ENCODE measurements at regions of chr1 and their contacts with region 1.

Region 1: DNA sequence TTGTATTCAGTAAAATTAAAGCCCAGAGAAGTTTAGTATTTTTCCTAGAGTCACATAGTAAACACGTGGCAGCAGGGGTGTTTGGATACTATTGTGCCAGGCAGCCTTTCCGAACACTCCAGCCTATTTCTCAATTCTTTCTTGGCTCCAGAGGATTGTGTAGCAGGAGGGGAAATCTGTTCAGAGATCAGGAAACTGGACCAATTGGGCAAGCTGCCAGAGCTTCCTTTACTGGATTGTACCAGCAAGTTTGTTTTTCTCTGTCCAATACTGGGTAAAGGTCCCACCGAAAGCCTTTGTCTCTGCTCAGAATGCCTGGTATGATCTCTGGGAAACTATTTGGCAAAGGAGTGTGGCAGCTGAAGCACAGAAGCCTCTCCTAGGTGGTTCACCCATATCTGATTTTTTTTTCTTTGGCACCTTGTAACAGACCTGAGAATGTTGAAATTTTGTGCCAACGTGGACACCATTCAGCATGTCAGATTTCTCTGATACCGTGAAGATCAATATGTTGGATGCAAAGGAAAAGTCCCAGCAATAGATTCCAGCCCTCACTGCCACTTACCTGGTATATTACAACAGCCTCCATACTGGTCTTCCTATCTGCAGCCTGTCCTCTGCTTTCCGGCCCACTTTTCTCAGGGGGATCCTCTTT is 126.2 kb downstream of the FGGY start:
- DNase-seq: peak; percentile 22
- H3K4me3 ChIP-seq: no peak overlapping the region
- H3K27ac ChIP-seq: no peak overlapping the region
- H3K4me1 ChIP-seq: no peaks in the 10 kb centered on the region
- H3K27me3 ChIP-seq: no peaks in the 10 kb centered on the region
- CTCF ChIP-seq: no peak

Region 2: DNA sequence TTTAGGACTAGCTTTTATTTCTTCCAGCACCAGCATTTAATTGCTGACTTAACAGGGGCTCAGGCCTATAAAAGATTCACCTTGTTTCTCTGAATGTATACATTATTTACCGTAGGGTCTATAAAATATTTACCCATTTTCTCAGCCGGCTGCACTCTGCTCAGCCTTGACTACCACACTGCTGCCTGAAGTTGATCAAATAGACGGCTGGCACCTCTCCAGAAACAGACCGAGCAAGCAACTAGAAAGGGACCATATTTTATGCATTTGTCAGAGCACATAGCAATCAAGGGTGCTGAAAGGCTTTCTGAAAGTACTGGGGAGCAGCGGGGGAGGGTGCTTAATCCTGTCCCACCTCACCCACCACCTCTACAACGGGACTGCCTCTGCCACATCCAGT is 190.8 kb before region 1 on chr1:
- CTCF ChIA-PET with region 1: no interaction called
- POLR2A ChIA-PET with region 1: no interaction called
- intact Hi-C with region 1: no loop called
- DNase-seq: no peak
- H3K4me3 ChIP-seq: no peak overlapping the region
- H3K27ac ChIP-seq: no peak overlapping the region
- H3K4me1 ChIP-seq: no peaks in the 10 kb centered on the region
- H3K27me3 ChIP-seq: peaks cover 10% of the 10 kb centered on the region
- CTCF ChIP-seq: no peak

Region 3: DNA sequence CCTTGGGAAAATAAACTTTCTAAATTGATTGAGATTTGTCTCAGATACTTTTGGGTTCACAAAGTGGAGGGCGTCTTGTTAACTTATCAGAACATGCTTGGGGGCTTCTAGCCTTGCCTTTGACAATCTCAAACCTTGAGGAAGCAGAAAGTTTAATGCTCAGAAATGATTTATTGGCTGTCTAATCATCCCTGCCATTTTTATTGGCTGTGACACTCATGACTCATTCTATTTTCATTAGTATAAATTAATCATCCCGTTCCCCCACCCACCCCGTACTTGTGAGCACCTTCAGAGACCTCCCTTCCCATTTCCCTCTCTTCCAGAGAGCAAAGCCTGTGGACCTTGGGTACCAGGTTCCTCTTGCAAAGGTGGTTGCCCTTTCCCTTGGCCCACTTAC is 39.1 kb before region 1 on chr1:
- CTCF ChIA-PET with region 1: no interaction called
- POLR2A ChIA-PET with region 1: no interaction called
- intact Hi-C with region 1: loop called (anchors 2 kb)
- DNase-seq: no peak
- H3K4me3 ChIP-seq: no peak overlapping the region
- H3K27ac ChIP-seq: no peak overlapping the region
- H3K4me1 ChIP-seq: no peaks in the 10 kb centered on the region
- H3K27me3 ChIP-seq: peaks cover 7% of the 10 kb centered on the region
- CTCF ChIP-seq: no peak

Region 4: DNA sequence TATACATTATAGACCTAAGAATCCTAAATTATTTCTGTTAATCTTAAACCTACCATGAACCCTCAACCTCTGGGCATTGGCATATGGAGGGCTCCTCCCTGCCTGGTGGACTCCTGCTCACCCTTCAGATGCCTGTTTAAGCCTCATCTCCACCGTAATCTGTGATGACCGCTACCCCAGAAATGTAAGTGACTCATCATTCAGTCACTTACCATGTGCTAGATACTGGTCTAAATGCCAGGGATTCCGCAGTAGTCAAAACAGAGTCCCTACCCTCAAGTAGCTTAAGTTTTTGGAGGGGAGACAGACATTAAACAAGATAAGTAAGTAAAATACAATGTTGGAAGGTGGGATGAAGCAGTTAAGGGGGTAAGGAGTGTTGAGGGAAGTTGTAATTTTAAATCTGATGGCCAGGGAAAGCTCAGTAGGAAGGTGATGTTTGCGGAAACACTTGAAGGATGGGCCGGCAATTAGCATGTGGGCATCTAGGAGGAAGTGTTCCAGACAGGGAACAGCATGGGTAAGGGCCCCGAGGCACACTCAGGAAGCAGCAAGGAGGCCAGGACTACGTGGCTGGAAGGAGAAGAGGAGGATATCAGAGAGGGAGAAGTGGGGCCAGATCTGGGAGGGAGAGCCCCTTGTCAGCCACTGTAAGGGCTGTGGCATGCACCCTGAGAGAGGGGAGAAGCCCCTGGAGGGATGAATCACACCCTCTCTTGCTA is 250.0 kb after region 1 on chr1:
- CTCF ChIA-PET with region 1: no interaction called
- POLR2A ChIA-PET with region 1: no interaction called
- intact Hi-C with region 1: no loop called
- DNase-seq: no peak
- H3K4me3 ChIP-seq: no peak overlapping the region
- H3K27ac ChIP-seq: no peak overlapping the region
- H3K4me1 ChIP-seq: peaks cover 3% of the 10 kb centered on the region
- H3K27me3 ChIP-seq: no peaks in the 10 kb centered on the region
- CTCF ChIP-seq: no peak

Measured in A673 (cell line).